ENCODE measurements at regions of chr3 and their contacts with region 1.

Region 1: DNA sequence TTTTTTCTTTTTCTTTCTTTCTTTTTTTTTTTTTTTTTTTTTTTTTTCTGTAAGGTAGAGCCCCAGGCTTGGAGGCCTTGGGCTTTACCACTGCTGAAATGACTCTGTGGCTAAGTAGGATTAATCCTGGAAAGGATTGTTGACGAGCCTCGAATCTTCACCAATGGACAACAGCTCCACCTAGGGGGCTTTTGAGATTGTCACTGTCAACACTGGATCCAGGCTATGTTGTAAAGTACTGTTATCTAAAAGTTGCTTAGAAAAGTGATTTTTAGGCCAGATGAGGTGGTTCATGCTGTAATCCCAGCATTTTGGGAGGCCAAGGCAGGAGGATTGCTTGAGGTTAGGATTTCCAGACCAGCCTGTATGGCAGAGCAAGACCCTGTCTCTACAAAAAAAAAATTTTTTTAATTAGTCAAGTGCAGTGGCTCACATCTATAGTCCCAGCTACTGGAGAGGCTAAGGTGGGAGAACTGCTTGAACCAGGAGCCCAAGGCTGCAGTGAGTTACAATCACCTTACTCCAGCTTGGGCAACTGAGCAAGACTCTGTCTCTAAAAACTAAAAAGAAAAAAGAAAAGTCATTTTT is 41.6 kb downstream of the KLHL18 start:
- DNase-seq: peak; percentile 65
- H3K4me3 Mint-ChIP-seq: no peak overlapping the region
- H3K27ac Mint-ChIP-seq: no peak overlapping the region
- H3K4me1 Mint-ChIP-seq: peaks cover 13% of the 10 kb centered on the region
- H3K27me3 Mint-ChIP-seq: no peaks in the 10 kb centered on the region
- CTCF ChIP-seq: no peak

Region 2: DNA sequence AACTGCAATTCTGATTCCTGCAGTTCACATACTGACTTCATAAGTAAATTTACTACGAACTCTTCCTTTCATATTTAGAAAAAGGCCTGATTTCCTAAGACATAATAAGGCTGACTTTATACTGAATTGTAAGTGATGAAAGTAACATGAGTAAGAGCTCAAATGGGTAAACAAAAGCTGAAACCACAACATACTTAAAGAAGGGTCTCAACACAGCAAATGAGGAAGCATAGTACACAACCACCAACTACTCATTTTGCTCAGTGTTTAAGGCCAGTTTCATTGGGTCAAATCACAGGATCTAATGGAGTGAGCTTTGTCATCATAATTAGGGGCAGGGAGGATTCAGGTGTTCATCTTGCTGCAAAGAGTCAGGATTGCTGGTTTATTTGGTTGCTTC is 241.9 kb before region 1 on chr3:
- CTCF ChIA-PET with region 1: no interaction called
- intact Hi-C with region 1: loop called (anchors 10 kb)
- DNase-seq: no peak
- H3K4me3 Mint-ChIP-seq: no peak overlapping the region
- H3K27ac Mint-ChIP-seq: no peak overlapping the region
- H3K4me1 Mint-ChIP-seq: peaks cover 8% of the 10 kb centered on the region
- H3K27me3 Mint-ChIP-seq: no peaks in the 10 kb centered on the region
- CTCF ChIP-seq: no peak

Region 3: GRCh38 chr3:47164007-47164881 is 160.1 kb before region 1 on chr3 and contains the start of gene SETD2:
- CTCF ChIA-PET with region 1: interaction called, 3 read pairs
- intact Hi-C with region 1: loop called (anchors 10 kb)
- DNase-seq: peak; percentile 91
- H3K4me3 Mint-ChIP-seq: peak within 1 kb of the TSS; percentile 79
- H3K27ac Mint-ChIP-seq: peak within 1 kb of the TSS; percentile 89
- H3K4me1 Mint-ChIP-seq: peaks cover 29% of the 10 kb centered on the region
- H3K27me3 Mint-ChIP-seq: no peaks in the 10 kb centered on the region
- CTCF ChIP-seq: peak; percentile 11
- total RNA-seq, gene SETD2: 35.2 and 39.2 TPM in 2 replicates

Region 4: GRCh38 chr3:47250309-47251060 is 73.9 kb before region 1 on chr3:
- CTCF ChIA-PET with region 1: interaction called, 4 read pairs
- intact Hi-C with region 1: loop called (anchors 2 kb)
- DNase-seq: peak; percentile 51
- H3K4me3 Mint-ChIP-seq: no peak overlapping the region
- H3K27ac Mint-ChIP-seq: no peak overlapping the region
- H3K4me1 Mint-ChIP-seq: no peaks in the 10 kb centered on the region
- H3K27me3 Mint-ChIP-seq: no peaks in the 10 kb centered on the region
- CTCF ChIP-seq: peak; percentile 10

Region 5: DNA sequence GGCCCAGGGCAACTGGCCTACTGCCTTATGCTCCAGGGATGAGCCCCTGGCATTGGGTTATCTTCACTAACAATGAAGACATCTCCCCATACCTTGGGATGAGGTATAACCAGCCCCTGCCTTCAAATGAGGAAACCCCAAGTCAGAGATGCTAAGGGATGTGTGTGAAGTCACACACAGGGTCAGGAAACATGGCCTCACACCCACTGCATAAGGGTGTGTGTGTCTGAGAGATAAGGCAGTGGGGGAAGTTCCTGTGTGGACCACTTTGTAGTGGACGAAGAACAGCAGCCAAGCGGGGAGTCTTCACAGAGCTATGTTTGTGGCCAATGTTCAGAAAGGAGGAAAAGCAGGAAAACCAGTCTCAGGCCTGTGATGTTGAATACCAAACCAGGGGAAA is 178.7 kb after region 1 on chr3:
- CTCF ChIA-PET with region 1: no interaction called
- intact Hi-C with region 1: no loop called
- DNase-seq: no peak
- H3K4me3 Mint-ChIP-seq: no peak overlapping the region
- H3K27ac Mint-ChIP-seq: no peak overlapping the region
- H3K4me1 Mint-ChIP-seq: no peaks in the 10 kb centered on the region
- H3K27me3 Mint-ChIP-seq: no peaks in the 10 kb centered on the region
- CTCF ChIP-seq: no peak

Measured in Calu3 (cell line).